Natural killer cell (primary cell): ENCODE measurements at regions of chr5 and their contacts with region 1.

Region 1: DNA sequence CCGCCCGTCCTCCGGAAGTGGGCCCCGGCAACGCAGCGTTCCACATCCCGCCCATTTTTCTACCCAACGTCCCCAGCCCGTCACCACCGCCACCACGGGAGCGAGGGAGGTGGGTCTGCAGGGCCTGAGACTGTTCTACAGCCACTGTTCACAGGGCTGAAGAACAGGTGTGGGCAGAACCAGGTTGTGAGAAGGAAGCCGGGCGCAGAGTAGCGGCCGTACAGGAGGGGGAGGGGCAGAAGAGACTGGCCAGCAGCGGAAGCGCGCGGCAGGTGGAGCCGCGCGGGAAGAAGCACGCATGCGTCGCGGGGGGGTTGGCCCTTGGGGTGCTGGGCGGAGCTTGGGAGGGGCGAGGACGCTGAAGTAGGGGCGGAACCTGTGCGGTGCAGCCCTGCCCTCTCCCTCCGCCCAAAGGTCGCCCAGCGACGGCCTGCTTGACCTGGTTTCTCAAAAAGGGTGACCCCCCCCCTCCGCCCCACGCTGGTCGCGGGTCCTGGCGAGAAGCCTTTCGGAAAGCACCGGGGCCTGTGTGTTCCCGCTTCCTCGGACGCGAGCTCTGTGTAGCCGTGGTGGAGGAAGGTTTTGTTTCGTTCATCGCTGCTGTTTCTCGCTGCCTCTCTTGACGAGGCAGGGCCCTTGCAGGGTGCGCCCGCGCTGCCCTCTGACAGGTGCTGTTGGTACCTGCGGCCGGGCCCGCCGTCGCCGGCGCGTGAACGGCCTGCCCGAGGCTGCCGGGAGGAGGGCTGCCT is 7.8 kb upstream of the MGAT1 start:
- DNase-seq: peak; percentile 95 to 98
- ATAC-seq: peak; percentile 80 to 91 (median 81)
- H3K4me3 ChIP-seq: peak overlapping the region; percentile 76
- H3K4me3 Mint-ChIP-seq: peak overlapping the region; percentile 72
- H3K27ac ChIP-seq: peak overlapping the region; percentile 97
- H3K27ac Mint-ChIP-seq: peak overlapping the region; percentile 83 to 96
- H3K4me1 ChIP-seq: peaks cover 54% of the 10 kb centered on the region
- H3K4me1 Mint-ChIP-seq: peaks cover 54 to 58% of the 10 kb centered on the region in 2 donors
- H3K27me3 ChIP-seq: no peaks in the 10 kb centered on the region
- H3K27me3 Mint-ChIP-seq: peaks cover 0 to 4% of the 10 kb centered on the region in 2 donors
- CTCF ChIP-seq: no peak

Region 2: GRCh38 chr5:180831139-180832048 is 21.0 kb after region 1 on chr5:
- intact Hi-C with region 1: loop called (anchors 1 kb)
- DNase-seq: peak; percentile 78 to 82
- ATAC-seq: peak; percentile 80 to 87 (median 81)
- H3K4me3 ChIP-seq: peak overlapping the region; percentile 95
- H3K4me3 Mint-ChIP-seq: peak overlapping the region; percentile 95
- H3K27ac ChIP-seq: peak overlapping the region; percentile 98
- H3K27ac Mint-ChIP-seq: peak overlapping the region; percentile 90 to 99
- H3K4me1 ChIP-seq: peaks cover 35% of the 10 kb centered on the region
- H3K4me1 Mint-ChIP-seq: peaks cover 33 to 48% of the 10 kb centered on the region in 2 donors
- H3K27me3 ChIP-seq: no peaks in the 10 kb centered on the region
- H3K27me3 Mint-ChIP-seq: no peaks in the 10 kb centered on the region
- CTCF ChIP-seq: peak; percentile 3

Region 3: GRCh38 chr5:180844432-180844831 is 34.0 kb after region 1 on chr5:
- intact Hi-C with region 1: no loop called
- DNase-seq: no peak
- ATAC-seq: no peak
- H3K4me3 ChIP-seq: no peak overlapping the region
- H3K4me3 Mint-ChIP-seq: no peak overlapping the region
- H3K27ac ChIP-seq: no peak overlapping the region
- H3K27ac Mint-ChIP-seq: no peak overlapping the region
- H3K4me1 ChIP-seq: no peaks in the 10 kb centered on the region
- H3K4me1 Mint-ChIP-seq: peaks cover 4 to 12% of the 10 kb centered on the region in 2 donors
- H3K27me3 ChIP-seq: no peaks in the 10 kb centered on the region
- H3K27me3 Mint-ChIP-seq: no peaks in the 10 kb centered on the region
- CTCF ChIP-seq: no peak